ENCODE measurements at regions of chr9 and their contacts with region 1.

Region 1: DNA sequence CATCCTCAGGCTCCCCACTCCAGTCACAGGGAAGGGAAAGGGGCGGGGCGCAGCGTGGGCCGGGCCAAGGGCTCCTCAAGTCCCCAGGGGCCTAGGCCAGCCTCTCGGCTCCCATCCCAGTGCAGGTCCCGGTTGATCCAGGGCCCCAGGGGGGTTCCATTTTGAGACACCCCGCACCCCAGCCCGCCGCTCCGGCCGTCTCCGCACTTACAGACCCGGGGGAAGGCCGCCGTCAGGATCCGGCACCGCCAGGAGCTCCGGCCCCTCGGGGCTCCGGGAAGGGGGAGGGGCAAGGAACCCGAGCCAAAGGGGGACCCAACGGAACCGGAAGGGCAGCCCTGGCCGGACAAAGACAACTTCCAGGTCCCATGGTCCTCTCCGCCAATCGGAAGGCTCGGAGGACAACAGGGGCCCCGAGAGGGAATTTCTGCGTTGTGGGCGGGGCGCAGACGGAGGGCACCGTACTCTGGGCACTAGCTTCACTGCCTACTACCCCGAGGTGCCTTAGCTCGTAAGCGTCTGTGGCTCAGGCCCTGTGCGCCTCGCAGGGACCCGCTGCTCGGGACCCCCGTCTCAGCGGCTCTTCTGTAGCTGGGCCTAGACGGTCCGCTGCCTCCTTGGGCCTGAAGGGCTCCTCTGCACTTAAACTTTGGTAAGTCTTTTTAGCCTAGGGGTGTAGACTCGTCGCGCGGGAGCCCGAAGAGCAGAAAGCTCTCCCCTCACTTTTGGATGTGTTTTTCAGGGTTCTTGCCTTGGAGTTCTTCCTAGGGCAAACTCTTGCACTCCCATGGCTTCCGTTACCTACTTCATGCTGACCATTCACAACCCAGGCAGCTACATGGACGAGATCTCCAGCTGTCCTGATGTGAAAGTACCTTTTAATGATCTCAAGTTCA is at the start of gene ZBTB26:
- DNase-seq: peak; percentile 68 to 95 (median 84)
- ATAC-seq: peak; percentile 97
- H3K4me3 ChIP-seq: peak within 1 kb of the TSS; percentile 66
- H3K4me3 Mint-ChIP-seq: peak within 1 kb of the TSS; percentile 95
- H3K27ac ChIP-seq: peak within 1 kb of the TSS; percentile 83 to 87
- H3K27ac Mint-ChIP-seq: no peak within 1 kb of the TSS
- H3K4me1 ChIP-seq: peaks cover 25% of the 10 kb centered on the region
- H3K4me1 Mint-ChIP-seq: peaks cover 33% of the 10 kb centered on the region
- H3K27me3 ChIP-seq: no peaks in the 10 kb centered on the region
- H3K27me3 Mint-ChIP-seq: no peaks in the 10 kb centered on the region
- CTCF ChIP-seq: no peak
- total RNA-seq, gene ZBTB26: 4.8 to 6.0 TPM

Region 2: DNA sequence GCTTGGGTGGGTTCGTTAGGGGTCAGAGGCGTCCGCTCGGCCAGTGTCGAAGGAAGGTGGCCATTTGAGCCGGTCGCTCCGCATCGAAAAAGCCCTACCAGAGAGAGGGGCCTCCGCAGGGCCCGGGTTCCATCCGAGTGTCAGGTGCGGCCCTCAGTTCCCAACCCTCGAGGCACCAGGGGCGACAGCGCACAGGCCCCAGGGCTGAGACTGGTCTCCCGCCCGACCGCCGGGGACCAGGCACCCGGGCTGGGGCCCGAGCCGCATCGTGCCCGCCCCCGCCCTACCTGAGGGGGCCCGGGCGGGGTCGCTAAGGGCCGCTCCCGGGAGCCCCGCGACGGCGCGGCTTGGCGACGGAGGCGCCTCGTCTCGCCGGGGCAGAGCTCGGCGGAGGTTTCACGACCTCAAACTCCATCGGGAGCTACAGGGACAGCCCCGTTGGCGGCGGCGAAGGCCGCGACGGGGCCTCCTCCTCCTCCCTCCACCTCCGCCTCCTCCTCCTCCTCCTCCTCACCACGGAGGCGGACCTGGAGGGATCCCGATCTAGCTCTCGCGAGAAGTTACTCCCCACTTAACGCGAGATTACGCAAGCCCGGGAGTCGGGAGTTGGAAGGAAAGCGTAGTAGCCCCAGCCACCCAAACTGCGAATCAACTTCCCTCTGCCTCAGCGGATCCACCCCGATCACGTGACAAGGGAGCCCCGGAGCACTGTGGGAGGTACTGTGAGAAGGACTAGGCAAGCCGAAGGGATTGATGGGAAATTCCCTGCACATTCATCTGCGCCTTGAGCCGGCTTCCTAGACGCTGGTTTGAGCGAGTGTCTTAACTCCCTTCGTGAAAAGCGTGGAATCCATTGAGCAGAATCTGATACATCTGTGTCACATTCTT is 26.4 kb before region 1 on chr9 and contains the start of gene RC3H2:
- CTCF ChIA-PET with region 1: interaction called, 4 read pairs
- POLR2A ChIA-PET with region 1: interaction called, 39 read pairs
- intact Hi-C with region 1: loop called in 1 of 2 experiments (anchors 2 kb)
- DNase-seq: peak; percentile 91 to 100 (median 94)
- ATAC-seq: peak; percentile 92
- H3K4me3 ChIP-seq: peak within 1 kb of the TSS; percentile 89
- H3K4me3 Mint-ChIP-seq: peak within 1 kb of the TSS; percentile 100
- H3K27ac ChIP-seq: peak within 1 kb of the TSS; percentile 87
- H3K27ac Mint-ChIP-seq: peak within 1 kb of the TSS; percentile 99
- H3K4me1 ChIP-seq: peaks cover 11% of the 10 kb centered on the region
- H3K4me1 Mint-ChIP-seq: peaks cover 36% of the 10 kb centered on the region
- H3K27me3 ChIP-seq: no peaks in the 10 kb centered on the region
- H3K27me3 Mint-ChIP-seq: no peaks in the 10 kb centered on the region
- CTCF ChIP-seq: no peak
- total RNA-seq, gene RC3H2: 85.2 to 86.8 TPM

Region 3: DNA sequence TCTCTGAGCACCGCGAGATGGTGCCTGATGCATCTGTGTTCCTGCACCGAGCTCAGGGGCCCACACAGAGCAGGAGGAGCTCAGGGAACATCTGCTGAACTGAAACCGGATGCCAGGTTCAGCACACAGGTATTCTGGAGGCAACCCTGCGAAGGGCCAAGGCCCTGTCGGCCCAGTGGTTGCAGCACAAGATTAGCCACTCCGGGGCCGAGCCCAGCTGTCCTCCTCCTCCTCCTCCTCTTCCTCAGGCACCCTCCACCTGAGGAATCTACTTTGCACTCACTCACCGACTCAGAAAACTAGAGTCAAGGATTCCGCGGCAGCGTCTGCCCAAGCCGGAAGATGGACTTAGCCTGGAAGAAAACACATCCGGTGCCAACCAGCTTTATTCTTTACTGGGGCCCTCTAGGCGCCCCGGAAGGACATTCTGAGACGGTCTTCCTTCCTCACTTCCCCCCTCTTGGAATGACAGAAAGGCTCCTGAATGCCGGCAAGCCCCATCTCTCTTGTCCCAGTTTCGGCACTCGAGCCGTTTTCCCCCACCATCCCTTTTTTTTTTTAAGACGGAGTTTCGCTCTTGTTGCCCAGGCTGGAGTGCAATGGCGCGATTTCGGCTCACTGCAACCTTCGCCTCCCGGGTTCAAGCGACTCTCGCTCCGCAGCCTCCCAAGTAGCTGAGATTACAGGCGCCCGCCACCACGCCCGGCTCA is 18.4 kb before region 1 on chr9 and contains the start of gene ZBTB6:
- CTCF ChIA-PET with region 1: interaction called, 8 read pairs
- POLR2A ChIA-PET with region 1: interaction called, 55 read pairs
- intact Hi-C with region 1: loop called (anchors 1 to 2 kb)
- DNase-seq: peak; percentile 52 to 89 (median 64)
- ATAC-seq: peak; percentile 98
- H3K4me3 ChIP-seq: peak within 1 kb of the TSS; percentile 78
- H3K4me3 Mint-ChIP-seq: peak within 1 kb of the TSS; percentile 96
- H3K27ac ChIP-seq: peak within 1 kb of the TSS; percentile 86 to 88
- H3K27ac Mint-ChIP-seq: peak within 1 kb of the TSS; percentile 88
- H3K4me1 ChIP-seq: peaks cover 11% of the 10 kb centered on the region
- H3K4me1 Mint-ChIP-seq: peaks cover 29% of the 10 kb centered on the region
- H3K27me3 ChIP-seq: no peaks in the 10 kb centered on the region
- H3K27me3 Mint-ChIP-seq: no peaks in the 10 kb centered on the region
- CTCF ChIP-seq: no peak
- total RNA-seq, gene ZBTB6: 3.6 to 3.9 TPM

Measured in CD4-positive, alpha-beta T cell (primary cell).